ENCODE measurements at regions of chr17 and their contacts with region 1.

Region 1: GRCh38 chr17:64281962-64282727 is 19.1 kb upstream of the TEX2 start:
- DNase-seq: peak; percentile 59
- ATAC-seq: peak; percentile 36
- H3K4me3 Mint-ChIP-seq: no peak overlapping the region
- H3K27ac Mint-ChIP-seq: no peak overlapping the region
- H3K4me1 Mint-ChIP-seq: peaks cover 5% of the 10 kb centered on the region
- H3K27me3 Mint-ChIP-seq: no peaks in the 10 kb centered on the region

Region 2: DNA sequence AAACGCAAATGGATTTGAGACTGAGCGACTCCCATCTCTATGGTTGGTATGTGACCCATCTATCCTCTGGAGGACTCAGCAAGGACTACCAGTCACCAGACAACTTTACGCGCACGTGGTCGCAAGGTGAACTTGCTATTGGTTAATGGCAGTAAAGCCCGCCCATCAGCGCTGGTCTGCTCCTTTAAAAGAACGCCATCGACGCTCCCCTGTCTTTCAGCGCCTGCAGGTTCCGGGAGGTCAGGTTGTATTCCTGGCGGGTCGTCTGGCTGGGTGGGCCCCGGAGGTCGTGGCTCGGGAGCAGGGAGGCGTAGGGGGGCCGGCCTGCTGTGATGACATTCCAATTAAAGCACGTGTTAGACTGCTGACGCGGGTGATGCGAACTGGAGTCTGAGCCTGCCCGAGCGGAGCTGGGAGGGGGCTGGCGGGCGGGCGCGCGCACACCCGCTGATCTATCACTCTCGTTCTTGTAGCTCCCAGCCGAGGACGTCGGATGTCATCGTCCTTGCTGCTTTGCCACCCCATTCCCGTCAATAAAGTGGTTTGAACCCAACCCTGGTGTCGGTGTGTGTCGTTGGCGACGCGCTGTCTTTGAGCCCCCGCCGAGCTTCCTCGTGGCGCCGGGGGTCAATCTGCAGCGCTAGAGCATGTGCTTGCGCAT is 136.3 kb before region 1 on chr17:
- CTCF ChIA-PET with region 1: interaction called, 26 read pairs
- DNase-seq: peak; percentile 99
- ATAC-seq: peak; percentile 95
- H3K4me3 Mint-ChIP-seq: no peak overlapping the region
- H3K27ac Mint-ChIP-seq: no peak overlapping the region
- H3K4me1 Mint-ChIP-seq: peaks cover 25% of the 10 kb centered on the region
- H3K27me3 Mint-ChIP-seq: no peaks in the 10 kb centered on the region

Region 3: GRCh38 chr17:64270885-64271284 is 11.3 kb before region 1 on chr17:
- CTCF ChIA-PET with region 1: interaction called, 18 read pairs
- DNase-seq: no peak
- ATAC-seq: peak; percentile 66
- H3K4me3 Mint-ChIP-seq: peak overlapping the region; percentile 30
- H3K27ac Mint-ChIP-seq: peak overlapping the region; percentile 80
- H3K4me1 Mint-ChIP-seq: peaks cover 21% of the 10 kb centered on the region
- H3K27me3 Mint-ChIP-seq: peaks cover 13% of the 10 kb centered on the region

Measured in activated CD8-positive, alpha-beta memory T cell treated with anti-CD3 and anti-CD28 coated beads, Interleukin-2, amount 10 ng/mL, durations not matched to agents 7 days and 5 days (primary cell).